ENCODE measurements at regions of chr10 and their contacts with region 1.

Region 1: GRCh38 chr10:28241741-28242399 is 61.0 kb downstream of the MPP7 start:
- DNase-seq: no peak
- ATAC-seq: peak; percentile 62 to 85
- H3K4me3 ChIP-seq: no peak overlapping the region
- H3K27ac ChIP-seq: no peak overlapping the region
- H3K4me1 ChIP-seq: no peaks in the 10 kb centered on the region
- H3K27me3 ChIP-seq: no peaks in the 10 kb centered on the region
- CTCF ChIP-seq: peak; percentile 74 to 95 (median 85)
- POLR2A ChIP-seq: no peak

Region 2: GRCh38 chr10:27446091-27446918 is 795.6 kb before region 1 on chr10:
- in situ Hi-C with region 1: no loop called
- intact Hi-C with region 1: loop called (anchors 5 kb)
- DNase-seq: no peak
- ATAC-seq: no peak
- H3K4me3 ChIP-seq: no peak overlapping the region
- H3K27ac ChIP-seq: no peak overlapping the region
- H3K4me1 ChIP-seq: no peaks in the 10 kb centered on the region
- H3K27me3 ChIP-seq: no peaks in the 10 kb centered on the region
- CTCF ChIP-seq: peak in 4 of 5 experiments; percentile 24 to 47 (median 32)
- POLR2A ChIP-seq: no peak

Region 3: GRCh38 chr10:27558612-27559020 is 683.3 kb before region 1 on chr10:
- in situ Hi-C with region 1: loop called in 2 of 4 experiments (anchors 10 to 25 kb)
- intact Hi-C with region 1: loop called (anchors 10 kb)
- DNase-seq: peak; percentile 10 to 36
- ATAC-seq: peak in 1 of 2 donors; percentile 91
- H3K4me3 ChIP-seq: no peak overlapping the region
- H3K27ac ChIP-seq: no peak overlapping the region
- H3K4me1 ChIP-seq: no peaks in the 10 kb centered on the region
- H3K27me3 ChIP-seq: no peaks in the 10 kb centered on the region
- CTCF ChIP-seq: peak; percentile 16 to 62 (median 49)
- POLR2A ChIP-seq: no peak

Region 4: DNA sequence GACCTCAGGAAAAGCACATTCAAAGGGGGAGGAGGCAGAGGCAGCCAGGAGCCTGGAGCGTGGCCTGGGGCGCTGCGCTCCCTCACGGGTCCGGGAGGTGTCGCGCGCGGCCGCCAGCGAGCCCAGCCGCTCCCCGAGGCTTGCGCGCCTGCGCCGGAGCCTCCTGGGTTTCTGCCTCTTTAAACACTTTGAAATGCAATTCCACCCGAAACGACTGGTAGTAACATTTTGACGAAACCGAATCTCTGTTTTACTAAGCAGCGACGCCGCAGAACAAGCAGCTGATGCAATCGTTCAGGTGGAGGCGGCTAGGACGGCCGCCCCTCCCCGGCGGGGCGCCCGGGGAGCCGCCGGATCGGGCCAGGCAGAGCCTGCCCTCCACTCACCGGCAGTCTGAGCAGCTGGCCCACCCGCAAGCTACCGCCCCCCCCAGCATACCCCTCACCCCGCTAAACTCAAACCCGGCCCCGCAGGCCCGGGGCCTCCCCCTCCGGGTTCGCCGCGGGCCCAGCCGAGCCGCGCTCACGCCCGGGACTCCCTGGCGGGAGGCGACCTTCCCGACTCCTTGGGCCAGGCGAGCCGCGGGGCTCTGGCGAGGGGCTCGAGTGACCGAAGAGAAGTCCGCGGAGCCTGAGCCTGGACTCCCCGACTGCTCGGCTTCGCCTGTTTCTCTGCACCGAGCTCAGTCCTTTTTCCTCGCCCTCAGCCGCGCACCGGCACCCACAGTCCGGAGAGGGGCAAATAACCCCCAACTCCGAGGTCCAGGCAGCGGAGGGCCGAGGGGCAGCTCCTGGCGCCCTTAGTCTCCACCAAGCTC is 499.5 kb before region 1 on chr10:
- in situ Hi-C with region 1: no loop called
- intact Hi-C with region 1: loop called (anchors 1 kb)
- DNase-seq: peak; percentile 35 to 52
- ATAC-seq: peak; percentile 71 to 78
- H3K4me3 ChIP-seq: peak overlapping the region; percentile 60 to 74 (median 64)
- H3K27ac ChIP-seq: peak overlapping the region in 3 of 4 donors; percentile 5 to 50 (median 19)
- H3K4me1 ChIP-seq: peaks cover 12 to 47% of the 10 kb centered on the region in 2 donors
- H3K27me3 ChIP-seq: peaks cover 55 to 76% (median 72%) of the 10 kb centered on the region in 3 donors
- CTCF ChIP-seq: peak; percentile 50 to 76 (median 64)
- POLR2A ChIP-seq: no peak

Region 5: DNA sequence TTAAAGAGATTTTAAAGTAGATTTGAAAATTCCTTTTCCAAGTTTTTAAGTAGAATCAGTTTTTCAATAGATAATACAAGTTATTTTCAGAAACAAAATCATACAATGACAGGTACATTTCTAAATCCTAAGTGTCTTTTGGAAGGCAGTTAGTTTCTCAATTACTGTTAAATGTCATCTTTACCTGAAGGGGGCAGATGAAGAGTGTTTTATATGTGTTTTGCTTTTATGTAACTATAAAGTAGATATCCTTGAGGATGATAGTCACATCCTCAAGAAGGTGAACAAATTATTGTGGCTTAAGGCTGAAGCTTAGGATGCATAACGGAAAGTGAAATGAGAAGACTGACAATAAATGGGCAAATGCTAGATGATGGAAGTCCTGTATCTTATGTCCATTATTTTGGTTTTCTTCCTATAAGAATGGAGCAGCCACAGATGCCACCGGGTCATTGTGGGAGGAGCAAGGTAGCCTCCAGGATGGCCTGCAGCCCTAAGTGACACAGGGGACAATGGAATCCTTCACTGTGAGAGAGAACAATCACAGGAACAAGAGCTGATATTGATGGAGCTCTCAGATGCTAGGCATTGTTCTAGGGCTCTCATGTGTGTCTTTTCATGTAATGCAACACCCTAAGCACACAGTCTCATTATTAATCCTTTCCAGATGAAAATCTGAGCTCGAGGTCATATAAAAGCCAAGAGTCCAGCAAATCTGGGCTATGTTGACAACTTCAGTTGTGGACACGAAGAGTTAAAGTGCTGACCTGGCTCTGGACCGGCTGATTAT is 482.2 kb before region 1 on chr10:
- in situ Hi-C with region 1: no loop called
- intact Hi-C with region 1: no loop called
- DNase-seq: no peak
- ATAC-seq: no peak
- H3K4me3 ChIP-seq: no peak overlapping the region
- H3K27ac ChIP-seq: no peak overlapping the region
- H3K4me1 ChIP-seq: no peaks in the 10 kb centered on the region
- H3K27me3 ChIP-seq: no peaks in the 10 kb centered on the region
- CTCF ChIP-seq: no peak
- POLR2A ChIP-seq: no peak

Measured in gastrocnemius medialis (tissue), 4 donors.